ENCODE measurements at regions of chr18 and their contacts with region 1.

Region 1: GRCh38 chr18:58567453-58568196 is 61.3 kb downstream of the ALPK2 start:
- DNase-seq: no peak
- H3K4me3 ChIP-seq: no peak overlapping the region
- H3K27ac ChIP-seq: no peak overlapping the region
- H3K4me1 ChIP-seq: no peaks in the 10 kb centered on the region
- H3K27me3 ChIP-seq: no peaks in the 10 kb centered on the region
- CTCF ChIP-seq: no peak
- POLR2A ChIP-seq: no peak

Region 2: GRCh38 chr18:58064406-58064998 is 503.1 kb before region 1 on chr18:
- CTCF ChIA-PET with region 1: no interaction called
- POLR2A ChIA-PET with region 1: interaction called, 10 read pairs
- dilution Hi-C with region 1: no loop called
- intact Hi-C with region 1: no loop called
- DNase-seq: no peak
- H3K4me3 ChIP-seq: no peak overlapping the region
- H3K27ac ChIP-seq: no peak overlapping the region
- H3K4me1 ChIP-seq: no peaks in the 10 kb centered on the region
- H3K27me3 ChIP-seq: no peaks in the 10 kb centered on the region
- CTCF ChIP-seq: no peak
- POLR2A ChIP-seq: no peak

Region 3: DNA sequence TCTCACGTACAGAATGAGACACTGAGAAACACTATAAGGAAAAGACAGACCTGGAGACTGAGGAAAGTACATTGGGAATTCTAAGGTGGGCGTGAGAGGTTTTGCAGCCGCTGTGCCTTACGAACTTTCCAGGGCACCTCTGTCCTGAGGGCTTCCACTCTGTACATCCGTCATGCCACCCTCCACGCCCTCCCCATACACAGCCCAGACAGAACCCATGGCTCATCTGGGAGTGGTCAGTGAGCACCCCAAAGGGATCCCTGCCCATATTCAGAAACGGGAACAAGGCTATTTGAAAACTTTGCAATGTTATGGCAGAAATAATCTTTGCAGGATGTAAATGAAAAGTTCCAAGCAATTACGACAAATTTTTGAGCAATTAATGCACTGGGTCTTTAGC is 201.7 kb after region 1 on chr18:
- CTCF ChIA-PET with region 1: no interaction called
- POLR2A ChIA-PET with region 1: no interaction called
- dilution Hi-C with region 1: no loop called
- intact Hi-C with region 1: no loop called
- DNase-seq: no peak
- H3K4me3 ChIP-seq: no peak overlapping the region
- H3K27ac ChIP-seq: no peak overlapping the region
- H3K4me1 ChIP-seq: peaks cover 2% of the 10 kb centered on the region
- H3K27me3 ChIP-seq: peaks cover 7 to 25% of the 10 kb centered on the region in 2 experiments
- CTCF ChIP-seq: no peak
- POLR2A ChIP-seq: no peak